Mammary epithelial cell (primary cell): ENCODE measurements at regions of chr1 and their contacts with region 1.

Region 1: GRCh38 chr1:1164701-1165451 is 8.8 kb upstream of the TTLL10 start:
- DNase-seq: peak; percentile 18
- H3K4me3 ChIP-seq: no peak overlapping the region
- H3K27ac ChIP-seq: no peak overlapping the region
- H3K4me1 ChIP-seq: peaks cover 30% of the 10 kb centered on the region
- H3K27me3 ChIP-seq: no peaks in the 10 kb centered on the region
- CTCF ChIP-seq: no peak

Region 2: DNA sequence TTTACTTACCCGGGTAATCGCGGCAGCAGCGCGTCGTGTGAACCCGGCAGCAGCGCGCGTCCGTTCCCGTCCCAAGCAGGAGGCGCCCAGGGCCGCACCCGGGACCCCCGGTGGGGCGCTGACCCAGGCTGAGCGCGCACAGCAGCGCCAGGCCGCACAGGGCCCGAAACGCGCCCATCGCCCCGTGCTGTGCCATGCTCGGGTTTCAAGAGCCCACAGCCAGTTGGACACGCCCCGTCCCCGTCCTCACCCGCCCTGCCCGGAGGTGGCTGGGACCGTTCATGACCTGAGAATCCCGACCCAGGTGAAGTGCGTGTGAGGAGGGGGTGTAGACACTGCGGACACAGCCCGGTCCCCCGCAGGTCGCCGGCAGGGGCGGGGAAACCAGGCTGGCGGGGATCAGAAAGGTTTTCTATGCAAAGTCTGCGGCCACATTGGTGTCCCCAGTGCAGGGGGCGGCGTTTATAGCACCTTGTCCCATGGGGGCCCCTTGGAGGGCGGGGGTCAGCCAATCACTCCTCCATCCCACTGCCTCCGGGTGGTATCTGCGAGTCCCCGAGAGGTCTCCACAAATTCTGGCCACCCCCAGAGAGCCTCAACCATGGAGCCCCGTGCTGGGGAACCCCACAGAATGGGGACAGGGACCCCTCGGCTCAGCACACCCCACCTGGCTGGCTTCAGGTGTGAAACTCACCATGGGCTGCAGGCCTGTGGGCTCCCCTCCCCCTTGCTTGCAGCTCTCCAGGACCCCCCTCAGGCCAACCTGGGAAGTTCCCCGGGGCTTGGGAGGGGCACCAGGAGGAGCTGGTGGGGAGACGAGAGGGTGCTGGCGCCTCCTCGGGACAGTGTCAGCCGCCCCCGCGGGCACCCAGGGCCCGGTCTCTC is 41.7 kb after region 1 on chr1 and contains the start of gene TNFRSF18:
- CTCF ChIA-PET with region 1: no interaction called
- dilution Hi-C with region 1: no loop called
- in situ Hi-C with region 1: no loop called
- intact Hi-C with region 1: loop called (anchors 5 kb)
- DNase-seq: no peak
- H3K4me3 ChIP-seq: no peak within 1 kb of the TSS
- H3K27ac ChIP-seq: no peak within 1 kb of the TSS
- H3K4me1 ChIP-seq: peaks cover 21% of the 10 kb centered on the region
- H3K27me3 ChIP-seq: peaks cover 2% of the 10 kb centered on the region
- CTCF ChIP-seq: no peak
- total RNA-seq, gene TNFRSF18: 0.67 TPM in 1 of 2 donors, not detected in the other